Aorta (tissue), 5 donors: ENCODE measurements at regions of chr12 and their contacts with region 1.

Region 1: DNA sequence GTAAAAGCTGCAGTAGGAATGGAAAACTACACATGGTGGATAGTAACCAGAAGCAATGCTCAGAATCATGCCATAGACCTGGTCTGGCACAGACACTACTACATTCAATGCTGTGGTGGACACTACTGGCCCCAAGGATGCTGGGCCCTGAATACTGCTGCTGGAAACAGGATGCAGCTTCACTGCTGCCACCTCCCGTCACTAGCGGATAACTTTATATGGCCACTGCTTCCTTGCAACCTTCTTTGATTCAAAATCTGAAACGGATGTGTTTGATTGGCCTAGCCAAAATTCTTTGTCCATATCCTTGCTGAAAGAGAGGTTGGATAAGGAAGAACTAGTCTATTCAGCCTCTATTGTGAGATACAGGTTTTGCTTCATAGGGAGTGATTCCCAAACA is 30.7 kb downstream of the ADCY6 start:
- DNase-seq: no peak
- ATAC-seq: no peak
- H3K4me3 ChIP-seq: no peak overlapping the region
- H3K27ac ChIP-seq: no peak overlapping the region
- H3K4me1 ChIP-seq: no peaks in the 10 kb centered on the region
- H3K27me3 ChIP-seq: no peaks in the 10 kb centered on the region

Region 2: GRCh38 chr12:48795480-48796455 is 37.5 kb after region 1 on chr12:
- intact Hi-C with region 1: loop called (anchors 1 to 2 kb)
- DNase-seq: peak in 1 of 2 donors; percentile 72
- ATAC-seq: peak; percentile 91
- H3K4me3 ChIP-seq: no peak overlapping the region
- H3K27ac ChIP-seq: no peak overlapping the region
- H3K4me1 ChIP-seq: no peaks in the 10 kb centered on the region
- H3K27me3 ChIP-seq: no peaks in the 10 kb centered on the region

Region 3: DNA sequence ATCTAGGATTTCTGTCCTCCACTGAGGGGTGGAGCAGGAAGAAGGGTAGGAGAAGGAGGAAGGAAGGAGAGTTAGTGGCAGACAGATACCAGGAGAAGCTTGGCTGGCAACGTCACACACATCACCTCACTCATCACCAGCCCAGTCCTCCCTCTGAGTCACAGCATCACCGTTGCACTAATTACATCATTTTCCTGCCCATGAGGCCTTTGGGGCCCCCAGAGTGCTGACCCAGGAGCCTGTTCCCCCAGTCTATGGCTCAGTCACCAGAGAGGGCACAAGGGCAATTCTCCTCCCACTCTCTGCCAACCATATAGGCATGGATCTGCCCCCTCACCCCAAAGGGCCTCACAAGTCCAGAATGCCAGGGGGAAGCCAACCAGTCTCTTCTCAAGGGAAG is 102.9 kb after region 1 on chr12:
- intact Hi-C with region 1: no loop called
- DNase-seq: no peak
- ATAC-seq: no peak
- H3K4me3 ChIP-seq: no peak overlapping the region
- H3K27ac ChIP-seq: no peak overlapping the region
- H3K4me1 ChIP-seq: no peaks in the 10 kb centered on the region
- H3K27me3 ChIP-seq: no peaks in the 10 kb centered on the region